HepG2 (cell line): ENCODE measurements at regions of chrX and their contacts with region 1.

Region 1: GRCh38 chrX:43836435-43837184 is 45.6 kb downstream of the MAOB start:
- DNase-seq: peak; percentile 12
- ATAC-seq: no peak
- H3K4me3 ChIP-seq: no peak overlapping the region
- H3K27ac ChIP-seq: no peak overlapping the region
- H3K4me1 ChIP-seq: no peaks in the 10 kb centered on the region
- H3K27me3 ChIP-seq: no peaks in the 10 kb centered on the region
- CTCF ChIP-seq: peak; percentile 56
- EP300 ChIP-seq: no peak
- POLR2A ChIP-seq: no peak
- RAD21 ChIP-seq: no peak

Region 2: GRCh38 chrX:43939187-43939926 is 102.7 kb after region 1 on chrX:
- CTCF ChIA-PET with region 1: interaction called, 17 read pairs
- POLR2A ChIA-PET with region 1: no interaction called
- in situ Hi-C with region 1: loop called (anchors 10 kb)
- intact Hi-C with region 1: loop called (anchors 1 kb)
- DNase-seq: no peak
- ATAC-seq: no peak
- H3K4me3 ChIP-seq: no peak overlapping the region
- H3K27ac ChIP-seq: no peak overlapping the region
- H3K4me1 ChIP-seq: no peaks in the 10 kb centered on the region
- H3K27me3 ChIP-seq: no peaks in the 10 kb centered on the region
- CTCF ChIP-seq: peak; percentile 45
- EP300 ChIP-seq: no peak
- POLR2A ChIP-seq: no peak
- RAD21 ChIP-seq: no peak

Region 3: GRCh38 chrX:44130189-44130588 is 293.6 kb after region 1 on chrX:
- CTCF ChIA-PET with region 1: no interaction called
- POLR2A ChIA-PET with region 1: no interaction called
- in situ Hi-C with region 1: no loop called
- intact Hi-C with region 1: no loop called
- DNase-seq: no peak
- ATAC-seq: no peak
- H3K4me3 ChIP-seq: no peak overlapping the region
- H3K27ac ChIP-seq: no peak overlapping the region
- H3K4me1 ChIP-seq: no peaks in the 10 kb centered on the region
- H3K27me3 ChIP-seq: no peaks in the 10 kb centered on the region
- CTCF ChIP-seq: no peak
- EP300 ChIP-seq: no peak
- POLR2A ChIP-seq: no peak
- RAD21 ChIP-seq: no peak